AG04449 (cell line): ENCODE measurements at regions of chr1 and their contacts with region 1.

Region 1: DNA sequence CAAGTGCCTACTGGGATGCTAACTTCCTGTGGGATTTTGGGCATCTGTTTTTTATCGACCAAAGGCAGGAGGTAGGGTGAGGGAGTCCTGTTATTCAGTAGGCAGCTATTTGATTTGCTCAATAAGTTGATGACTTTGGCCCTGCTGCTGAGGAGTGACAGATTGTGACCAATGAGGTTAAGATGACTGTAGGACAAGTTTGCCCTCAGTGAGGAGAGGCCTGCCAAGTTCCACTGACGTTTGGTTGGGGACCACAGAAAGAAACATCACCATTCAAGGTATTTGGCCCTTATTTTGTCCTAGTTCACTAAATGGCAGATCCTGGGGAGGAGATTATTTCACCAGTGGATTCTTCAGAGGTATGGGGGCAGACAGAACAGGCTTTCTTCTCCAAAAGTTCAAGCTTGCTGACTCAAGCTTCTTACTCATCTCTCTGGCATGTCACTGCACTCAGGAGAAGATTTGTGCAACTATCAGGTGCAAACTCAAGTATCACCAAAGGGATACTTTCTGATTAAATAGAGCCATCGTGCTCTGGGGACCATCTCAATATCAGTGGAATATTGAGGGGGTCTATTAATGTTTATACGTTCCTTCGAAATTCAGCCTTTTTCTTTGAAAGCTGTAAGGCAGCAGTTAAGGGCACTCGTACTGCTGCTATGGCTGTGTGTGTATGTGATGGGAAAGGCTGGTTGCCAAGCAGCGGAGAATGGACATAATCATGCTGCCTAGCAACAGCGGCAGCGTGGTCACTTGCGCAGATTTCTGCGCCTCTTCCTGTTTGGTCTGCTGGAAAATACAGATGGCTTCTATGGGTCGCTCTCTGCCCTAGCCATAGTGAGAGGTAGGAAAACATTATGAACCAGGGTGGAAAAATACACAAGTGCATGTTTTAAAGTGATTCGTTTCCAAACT is 78.7 kb downstream of the PBX1 start:
- DNase-seq: no peak
- H3K4me3 ChIP-seq: no peak overlapping the region
- CTCF ChIP-seq: no peak

Region 2: GRCh38 chr1:164510435-164510834 is 127.3 kb before region 1 on chr1:
- CTCF ChIA-PET with region 1: no interaction called
- POLR2A ChIA-PET with region 1: no interaction called
- DNase-seq: no peak
- H3K4me3 ChIP-seq: no peak overlapping the region
- CTCF ChIP-seq: peak; percentile 31

Region 3: DNA sequence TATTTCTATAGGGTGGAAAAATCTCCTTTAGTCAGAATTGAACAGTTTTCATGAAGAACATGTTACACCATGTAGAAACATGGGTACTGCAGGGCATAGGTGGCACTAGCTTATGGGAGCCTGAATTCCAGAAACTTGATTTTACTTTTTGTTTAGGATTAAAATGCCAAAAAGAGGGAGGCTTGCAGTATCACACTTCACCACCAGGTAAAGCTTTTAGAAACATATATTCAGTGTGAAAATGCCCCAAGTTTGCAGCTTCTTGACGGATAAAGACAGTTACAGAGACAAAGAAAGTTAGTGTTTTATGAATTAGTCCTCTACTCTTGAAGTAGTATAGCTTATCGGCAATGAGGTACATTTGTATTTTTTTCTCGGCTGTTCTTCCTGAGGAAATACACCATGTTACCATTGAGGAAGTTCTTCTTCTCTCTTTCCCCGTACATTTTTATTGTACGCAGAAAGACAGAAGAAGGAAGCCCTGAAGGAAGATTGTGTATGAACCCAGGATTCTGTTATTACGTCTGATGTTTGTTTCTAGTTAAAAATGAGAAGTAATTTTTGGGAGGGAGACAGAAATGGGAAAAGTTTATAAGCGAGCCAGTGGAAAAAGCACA is 12.6 kb before region 1 on chr1:
- CTCF ChIA-PET with region 1: interaction called, 11 read pairs
- POLR2A ChIA-PET with region 1: no interaction called
- DNase-seq: no peak
- H3K4me3 ChIP-seq: no peak overlapping the region
- CTCF ChIP-seq: peak; percentile 10

Region 4: GRCh38 chr1:164651351-164651951 is 13.7 kb after region 1 on chr1:
- CTCF ChIA-PET with region 1: no interaction called
- POLR2A ChIA-PET with region 1: no interaction called
- DNase-seq: no peak
- H3K4me3 ChIP-seq: no peak overlapping the region
- CTCF ChIP-seq: no peak

Region 5: GRCh38 chr1:164735315-164736052 is 97.8 kb after region 1 on chr1:
- CTCF ChIA-PET with region 1: no interaction called
- POLR2A ChIA-PET with region 1: no interaction called
- DNase-seq: peak; percentile 7
- H3K4me3 ChIP-seq: no peak overlapping the region
- CTCF ChIP-seq: no peak